Vagina (tissue), 2 donors: ENCODE measurements at regions of chr14 and their contacts with region 1.

Region 1: GRCh38 chr14:33118668-33119067 is 180.0 kb downstream of the NPAS3 start:
- DNase-seq: no peak
- H3K4me3 ChIP-seq: no peak overlapping the region
- H3K27ac ChIP-seq: no peak overlapping the region
- H3K4me1 ChIP-seq: no peaks in the 10 kb centered on the region
- H3K27me3 ChIP-seq: no peaks in the 10 kb centered on the region
- CTCF ChIP-seq: no peak
- POLR2A ChIP-seq: no peak

Region 2: GRCh38 chr14:33475623-33476022 is 357.0 kb after region 1 on chr14:
- intact Hi-C with region 1: no loop called
- DNase-seq: no peak
- H3K4me3 ChIP-seq: no peak overlapping the region
- H3K27ac ChIP-seq: no peak overlapping the region
- H3K4me1 ChIP-seq: no peaks in the 10 kb centered on the region
- H3K27me3 ChIP-seq: no peaks in the 10 kb centered on the region
- CTCF ChIP-seq: no peak
- POLR2A ChIP-seq: no peak

Region 3: DNA sequence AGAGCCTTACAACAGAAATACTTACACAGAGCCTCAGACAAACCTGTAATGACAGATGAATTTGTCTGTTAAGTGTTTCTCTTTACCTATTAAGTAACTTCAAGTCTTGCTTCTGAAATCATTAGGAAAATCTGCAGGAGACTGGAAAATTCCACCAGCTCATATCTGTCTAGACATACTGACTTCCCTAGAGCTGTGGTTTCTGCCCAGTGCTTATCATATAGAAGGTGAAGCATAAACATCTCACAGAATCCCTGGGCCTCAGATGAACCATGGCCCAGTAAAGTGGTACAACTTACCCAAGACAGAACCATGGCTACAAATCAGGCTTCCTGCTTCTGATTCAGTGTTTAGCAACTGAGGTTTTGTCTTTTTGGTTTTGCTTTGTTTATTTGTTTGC is 740.6 kb after region 1 on chr14:
- intact Hi-C with region 1: loop called (anchors 5 kb)
- DNase-seq: no peak
- H3K4me3 ChIP-seq: no peak overlapping the region
- H3K27ac ChIP-seq: no peak overlapping the region
- H3K4me1 ChIP-seq: no peaks in the 10 kb centered on the region
- H3K27me3 ChIP-seq: no peaks in the 10 kb centered on the region
- CTCF ChIP-seq: no peak
- POLR2A ChIP-seq: no peak